CD14-positive monocyte (primary cell): ENCODE measurements at regions of chr22 and their contacts with region 1.

Region 1: GRCh38 chr22:45309472-45310227 is at the start of gene FAM118A:
- DNase-seq: peak; percentile 87 to 89 (median 89)
- H3K4me3 ChIP-seq: peak within 1 kb of the TSS; percentile 85 to 88 (median 88)
- H3K4me3 Mint-ChIP-seq: peak within 1 kb of the TSS; percentile 88 to 91
- H3K27ac ChIP-seq: peak within 1 kb of the TSS; percentile 88 to 90
- H3K27ac Mint-ChIP-seq: peak within 1 kb of the TSS; percentile 88 to 96 (median 94)
- H3K4me1 ChIP-seq: peaks cover 35 to 40% of the 10 kb centered on the region in 2 donors
- H3K4me1 Mint-ChIP-seq: peaks cover 59% of the 10 kb centered on the region
- H3K27me3 ChIP-seq: no peaks in the 10 kb centered on the region
- H3K27me3 Mint-ChIP-seq: peaks cover 2 to 5% (median 4%) of the 10 kb centered on the region in 3 donors
- CTCF ChIP-seq: no peak
- polyA plus RNA-seq, gene FAM118A: 20.0 to 423 (median 27.9) TPM

Region 2: DNA sequence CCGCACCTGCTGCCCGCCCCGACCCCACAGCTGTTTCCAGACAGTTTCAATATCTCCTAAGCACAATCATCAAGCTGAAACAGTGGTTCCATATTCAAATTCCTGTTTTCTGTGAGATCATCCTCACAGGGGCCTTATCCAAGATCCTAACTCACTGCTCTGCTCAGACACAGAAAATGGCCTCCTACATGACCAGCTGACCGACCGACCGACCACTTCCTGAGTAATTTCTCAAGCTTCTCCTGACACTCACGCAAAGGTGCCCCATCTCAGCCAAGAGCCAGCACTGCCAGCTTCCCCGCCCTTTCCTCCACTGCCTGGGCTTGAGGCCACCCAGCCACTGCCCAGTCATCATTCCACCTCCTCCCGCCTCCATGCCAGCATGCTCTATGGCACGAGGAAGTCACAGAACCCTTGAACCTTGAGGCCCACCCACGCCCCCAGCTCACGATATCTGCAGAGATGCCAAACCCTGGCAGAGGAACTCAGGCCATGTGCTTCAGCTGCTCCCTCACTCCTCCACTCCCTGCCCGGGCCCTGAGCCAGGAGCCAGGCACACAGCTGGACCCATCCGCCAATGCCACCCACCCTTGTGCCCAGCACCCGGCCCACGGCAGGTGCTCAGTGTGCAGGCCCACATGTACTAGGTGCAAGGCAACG is 83.0 kb before region 1 on chr22:
- intact Hi-C with region 1: loop called in 1 of 2 experiments (anchors 5 kb)
- DNase-seq: peak; percentile 91 to 97 (median 93)
- H3K4me3 ChIP-seq: peak overlapping the region in 1 of 3 experiments; percentile 67
- H3K4me3 Mint-ChIP-seq: peak overlapping the region; percentile 61 to 80
- H3K27ac ChIP-seq: peak overlapping the region; percentile 95 to 98
- H3K27ac Mint-ChIP-seq: peak overlapping the region; percentile 97 to 100 (median 99)
- H3K4me1 ChIP-seq: peaks cover 96 to 100% of the 10 kb centered on the region in 2 donors
- H3K4me1 Mint-ChIP-seq: peaks cover 95% of the 10 kb centered on the region
- H3K27me3 ChIP-seq: no peaks in the 10 kb centered on the region
- H3K27me3 Mint-ChIP-seq: peaks cover 0 to 2% (median 0%) of the 10 kb centered on the region in 3 donors
- CTCF ChIP-seq: no peak